ENCODE measurements at regions of chr2 and their contacts with region 1.

Region 1: DNA sequence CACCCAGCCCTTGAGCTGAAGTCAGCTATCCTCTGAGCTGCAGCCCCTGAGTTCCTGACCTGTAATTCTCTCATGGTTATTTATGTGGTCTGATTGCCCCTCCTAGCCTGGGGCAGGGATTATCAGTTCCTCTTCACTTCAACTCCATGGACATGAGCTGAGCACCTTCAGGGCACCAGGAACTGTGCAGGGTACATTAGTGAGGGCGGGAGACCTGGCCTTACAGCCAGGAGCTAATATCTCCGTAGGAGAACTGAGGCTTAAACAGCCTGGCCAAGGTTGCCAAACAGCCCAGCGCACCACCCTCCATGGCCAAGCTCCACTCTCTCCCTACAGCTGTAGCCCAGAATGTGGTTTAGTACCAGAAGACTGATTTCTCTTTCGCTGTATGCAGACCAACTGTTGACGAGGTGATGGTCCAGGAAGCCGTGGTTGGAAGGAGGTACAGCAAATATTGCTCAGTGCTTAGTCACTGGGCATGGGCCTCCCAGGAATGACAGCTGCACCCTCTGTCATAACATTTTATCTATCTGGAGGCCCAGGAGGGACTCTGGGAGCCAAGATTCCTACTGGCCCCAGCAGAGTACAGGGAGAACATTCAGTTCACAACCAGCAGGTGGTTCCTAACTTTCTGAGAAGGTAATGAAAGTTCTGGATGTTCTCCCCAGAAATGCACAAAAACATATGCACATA is 228.7 kb upstream of the SIX2 start:
- DNase-seq: peak; percentile 87 to 99
- H3K4me3 ChIP-seq: peak overlapping the region; percentile 5; the same call in 1 of the 2 replicates
- H3K27ac ChIP-seq: peak overlapping the region; percentile 63
- H3K4me1 ChIP-seq: peaks cover 48% of the 10 kb centered on the region
- H3K27me3 ChIP-seq: no peaks in the 10 kb centered on the region
- CTCF ChIP-seq: peak; percentile 74

Region 2: GRCh38 chr2:45119855-45120254 is 118.1 kb before region 1 on chr2:
- CTCF ChIA-PET with region 1: no interaction called
- POLR2A ChIA-PET with region 1: no interaction called
- intact Hi-C with region 1: loop called (anchors 5 kb)
- DNase-seq: peak; percentile 67 to 100
- H3K4me3 ChIP-seq: no peak overlapping the region; the same call in 1 of the 2 replicates
- H3K27ac ChIP-seq: peak overlapping the region; percentile 85
- H3K4me1 ChIP-seq: peaks cover 63% of the 10 kb centered on the region
- H3K27me3 ChIP-seq: no peaks in the 10 kb centered on the region
- CTCF ChIP-seq: no peak

Region 3: GRCh38 chr2:45169339-45170190 is 68.4 kb before region 1 on chr2:
- CTCF ChIA-PET with region 1: no interaction called
- POLR2A ChIA-PET with region 1: interaction called, 4 read pairs
- intact Hi-C with region 1: loop called (anchors 2 kb)
- DNase-seq: peak in 1 of 2 experiments; percentile 56
- H3K4me3 ChIP-seq: peak overlapping the region; percentile 79
- H3K27ac ChIP-seq: peak overlapping the region; percentile 57
- H3K4me1 ChIP-seq: peaks cover 57% of the 10 kb centered on the region
- H3K27me3 ChIP-seq: no peaks in the 10 kb centered on the region
- CTCF ChIP-seq: 0 out of 2 replicates have a peak, but pooled peaks have one; percentile 19

Region 4: GRCh38 chr2:45275242-45275805 is 37.3 kb after region 1 on chr2:
- CTCF ChIA-PET with region 1: no interaction called
- POLR2A ChIA-PET with region 1: no interaction called
- intact Hi-C with region 1: loop called (anchors 1 kb)
- DNase-seq: peak; percentile 64 to 94
- H3K4me3 ChIP-seq: no peak overlapping the region
- H3K27ac ChIP-seq: peak overlapping the region; percentile 77
- H3K4me1 ChIP-seq: peaks cover 52% of the 10 kb centered on the region
- H3K27me3 ChIP-seq: no peaks in the 10 kb centered on the region
- CTCF ChIP-seq: no peak

Region 5: DNA sequence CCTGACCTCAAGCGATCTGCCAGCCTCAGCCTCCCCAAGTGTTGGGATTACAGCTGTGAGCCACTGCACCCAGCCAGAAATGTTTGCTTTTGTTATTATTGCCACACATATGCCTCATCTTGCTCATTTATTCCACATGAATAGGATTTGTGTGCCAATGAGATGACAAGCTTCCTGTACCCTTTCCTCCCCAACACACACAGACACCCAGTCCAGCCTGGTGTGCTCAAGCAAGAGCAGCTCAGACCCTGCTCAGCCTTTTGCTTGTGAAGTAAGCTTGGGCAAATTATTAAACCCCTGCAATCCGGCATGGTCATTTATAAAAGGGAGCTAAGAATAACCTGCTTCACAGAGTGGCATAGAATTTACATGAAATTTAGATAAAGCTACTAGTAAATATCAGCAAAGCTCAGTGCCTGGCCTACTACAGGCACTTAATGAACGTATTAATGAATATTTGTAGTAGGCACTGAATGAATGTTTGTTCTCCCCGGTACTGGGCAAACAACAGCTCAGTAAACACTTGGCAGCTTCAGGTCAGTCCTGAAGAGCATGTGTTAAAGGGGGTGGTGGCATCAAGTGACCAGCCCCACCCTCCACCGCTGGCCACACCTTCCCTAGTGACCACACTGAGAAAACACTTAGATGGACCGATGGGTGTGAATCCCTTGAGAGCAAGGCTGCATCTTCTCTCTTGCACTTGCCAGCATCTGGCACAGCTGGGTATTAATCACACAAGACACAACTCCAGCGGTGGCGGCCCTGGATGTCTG is 92.8 kb after region 1 on chr2:
- CTCF ChIA-PET with region 1: no interaction called
- POLR2A ChIA-PET with region 1: interaction called, 4 read pairs
- intact Hi-C with region 1: loop called (anchors 10 kb)
- DNase-seq: peak; percentile 28 to 86
- H3K4me3 ChIP-seq: no peak overlapping the region
- H3K27ac ChIP-seq: peak overlapping the region; percentile 67
- H3K4me1 ChIP-seq: peaks cover 46% of the 10 kb centered on the region
- H3K27me3 ChIP-seq: no peaks in the 10 kb centered on the region
- CTCF ChIP-seq: no peak

Region 6: DNA sequence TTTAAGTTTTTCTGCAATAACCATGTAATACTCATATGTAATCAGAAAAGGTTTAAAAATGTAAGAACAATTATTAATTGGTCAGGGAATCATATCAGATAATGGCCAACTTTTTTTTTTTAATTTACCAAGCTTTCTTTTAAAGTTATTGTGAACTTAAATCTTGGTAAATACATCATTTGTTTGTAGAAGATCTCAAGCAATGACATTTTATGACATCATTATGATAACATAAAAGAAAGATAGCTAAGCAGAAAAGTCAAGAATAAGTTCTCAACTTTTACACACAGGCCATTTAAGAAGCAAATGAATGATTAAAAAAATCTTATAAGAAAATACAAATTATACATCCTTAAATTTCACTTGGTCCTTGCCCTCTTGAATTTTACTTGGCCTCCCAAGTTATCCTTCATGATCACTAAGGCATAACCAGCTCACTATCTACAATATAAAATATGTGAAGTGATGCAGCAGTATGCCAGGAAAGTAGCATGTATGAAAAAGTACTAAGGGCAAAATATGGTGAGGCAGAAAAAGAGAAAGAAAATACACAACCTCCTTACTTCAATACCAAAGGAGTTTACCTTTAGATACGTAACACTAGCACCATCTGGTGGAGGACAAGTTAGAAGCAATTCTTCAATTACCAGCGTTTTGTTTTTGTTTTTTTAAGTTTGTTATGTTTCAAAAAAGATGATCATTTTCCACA is 256.4 kb after region 1 on chr2:
- CTCF ChIA-PET with region 1: no interaction called
- POLR2A ChIA-PET with region 1: no interaction called
- intact Hi-C with region 1: loop called (anchors 5 kb)
- DNase-seq: peak; percentile 17 to 68
- H3K4me3 ChIP-seq: no peak overlapping the region
- H3K27ac ChIP-seq: no peak overlapping the region
- H3K4me1 ChIP-seq: no peaks in the 10 kb centered on the region
- H3K27me3 ChIP-seq: no peaks in the 10 kb centered on the region
- CTCF ChIP-seq: peak; percentile 96

Measured in PC-9 (cell line).